Mammary epithelial cell (primary cell): ENCODE measurements at regions of chr15 and their contacts with region 1.

Region 1: GRCh38 chr15:80455668-80456442 is 51.7 kb downstream of the ARNT2 start:
- DNase-seq: peak; percentile 72
- H3K4me3 ChIP-seq: no peak overlapping the region
- H3K27ac ChIP-seq: no peak overlapping the region
- H3K4me1 ChIP-seq: peaks cover 5% of the 10 kb centered on the region
- H3K27me3 ChIP-seq: no peaks in the 10 kb centered on the region
- CTCF ChIP-seq: peak; percentile 95 to 97

Region 2: GRCh38 chr15:80350941-80351610 is 104.8 kb before region 1 on chr15:
- CTCF ChIA-PET with region 1: no interaction called
- dilution Hi-C with region 1: no loop called
- in situ Hi-C with region 1: no loop called
- intact Hi-C with region 1: no loop called
- DNase-seq: no peak
- H3K4me3 ChIP-seq: no peak overlapping the region
- H3K27ac ChIP-seq: no peak overlapping the region
- H3K4me1 ChIP-seq: no peaks in the 10 kb centered on the region
- H3K27me3 ChIP-seq: no peaks in the 10 kb centered on the region
- CTCF ChIP-seq: no peak

Region 3: DNA sequence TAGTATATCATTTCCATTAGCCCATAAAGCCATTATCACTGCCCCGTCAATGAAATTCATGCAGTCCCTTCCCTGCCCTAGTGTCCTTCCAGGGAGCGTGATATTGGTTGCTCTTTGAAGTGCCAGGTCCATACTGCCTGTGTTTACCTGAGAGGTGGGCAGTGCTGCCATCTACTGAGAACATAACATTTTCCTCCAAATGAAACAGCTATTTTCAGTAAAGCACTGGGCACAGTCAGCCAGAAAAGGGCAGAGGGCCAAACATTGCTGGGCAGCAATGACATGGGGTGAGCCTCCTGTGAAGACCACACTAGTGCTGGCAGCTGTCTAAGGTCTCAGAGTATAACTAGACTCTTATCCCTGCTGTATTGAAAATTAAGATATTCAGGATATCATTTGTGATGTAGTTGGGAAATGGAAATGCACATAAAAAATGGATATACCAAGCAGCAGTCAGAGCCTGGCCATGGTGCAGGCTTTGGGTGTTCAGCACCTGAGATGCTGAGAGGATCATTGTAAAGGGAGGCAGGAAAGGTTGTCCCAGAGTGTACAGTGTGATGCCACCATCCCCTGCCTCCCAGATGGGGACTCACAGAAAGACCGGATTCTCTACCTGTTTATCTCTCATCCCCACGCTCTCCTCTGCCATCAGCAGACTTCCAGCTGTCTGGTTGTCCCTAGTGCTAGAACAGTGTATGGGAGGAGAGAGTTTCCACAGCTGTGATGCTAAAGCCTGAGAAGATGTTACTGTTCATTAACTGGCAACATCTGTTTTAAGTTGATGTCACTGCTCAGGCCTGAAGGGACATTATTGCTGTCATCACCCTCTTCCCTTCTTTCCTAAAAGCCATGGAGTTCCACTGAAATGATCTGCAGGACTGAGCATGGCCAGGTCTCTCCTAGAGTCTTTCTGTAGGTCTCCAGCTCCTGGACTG is 57.1 kb after region 1 on chr15:
- CTCF ChIA-PET with region 1: interaction called, 12 read pairs
- dilution Hi-C with region 1: no loop called
- in situ Hi-C with region 1: no loop called
- intact Hi-C with region 1: loop called (anchors 1 kb)
- DNase-seq: peak; percentile 12
- H3K4me3 ChIP-seq: no peak overlapping the region
- H3K27ac ChIP-seq: no peak overlapping the region
- H3K4me1 ChIP-seq: peaks cover 3% of the 10 kb centered on the region
- H3K27me3 ChIP-seq: no peaks in the 10 kb centered on the region
- CTCF ChIP-seq: peak; percentile 17 to 48

Region 4: GRCh38 chr15:80567721-80568157 is 111.9 kb after region 1 on chr15:
- CTCF ChIA-PET with region 1: no interaction called
- dilution Hi-C with region 1: no loop called
- in situ Hi-C with region 1: loop called (anchors 5 to 10 kb)
- intact Hi-C with region 1: loop called (anchors 1 kb)
- DNase-seq: peak; percentile 68
- H3K4me3 ChIP-seq: no peak overlapping the region
- H3K27ac ChIP-seq: no peak overlapping the region
- H3K4me1 ChIP-seq: no peaks in the 10 kb centered on the region
- H3K27me3 ChIP-seq: no peaks in the 10 kb centered on the region
- CTCF ChIP-seq: peak; percentile 83 to 94

Region 5: DNA sequence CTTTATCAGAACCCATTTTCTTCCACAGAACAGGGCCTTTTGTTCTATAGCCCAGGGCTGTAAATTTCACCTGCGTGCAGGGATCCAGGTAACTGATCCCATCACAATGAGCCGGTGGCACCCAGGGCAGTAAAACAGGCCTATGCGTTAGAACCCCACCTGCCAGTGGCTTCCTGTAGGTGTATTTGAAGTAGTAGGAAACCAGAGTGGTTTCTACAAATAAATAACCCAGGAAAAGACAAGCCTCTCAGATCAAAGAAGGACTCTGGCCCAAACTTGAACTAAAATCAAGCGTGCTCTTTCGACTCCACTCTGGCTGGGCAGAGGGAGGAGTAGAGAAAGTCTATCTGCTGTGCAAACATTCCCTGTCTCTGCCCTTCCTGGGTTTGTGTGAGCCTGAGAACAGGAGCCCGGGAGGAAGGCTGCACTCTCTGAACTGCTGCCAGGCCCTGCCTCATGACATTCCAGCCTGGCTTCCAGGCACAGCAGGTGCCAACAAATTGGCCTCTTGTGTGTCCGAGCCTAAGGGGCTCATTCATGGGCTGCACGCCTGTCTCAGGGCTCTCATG is 401.0 kb after region 1 on chr15:
- CTCF ChIA-PET with region 1: no interaction called
- dilution Hi-C with region 1: no loop called
- in situ Hi-C with region 1: no loop called
- intact Hi-C with region 1: loop called (anchors 5 kb)
- DNase-seq: no peak
- H3K4me3 ChIP-seq: no peak overlapping the region
- H3K27ac ChIP-seq: no peak overlapping the region
- H3K4me1 ChIP-seq: peaks cover 26% of the 10 kb centered on the region
- H3K27me3 ChIP-seq: no peaks in the 10 kb centered on the region
- CTCF ChIP-seq: no peak

Region 6: GRCh38 chr15:81106560-81106959 is 650.7 kb after region 1 on chr15:
- CTCF ChIA-PET with region 1: no interaction called
- dilution Hi-C with region 1: no loop called
- in situ Hi-C with region 1: no loop called
- intact Hi-C with region 1: loop called (anchors 10 kb)
- DNase-seq: peak; percentile 67
- H3K4me3 ChIP-seq: no peak overlapping the region
- H3K27ac ChIP-seq: no peak overlapping the region
- H3K4me1 ChIP-seq: peaks cover 11% of the 10 kb centered on the region
- H3K27me3 ChIP-seq: no peaks in the 10 kb centered on the region
- CTCF ChIP-seq: peak; percentile 79 to 82